ENCODE measurements at regions of chr12 and their contacts with region 1.

Region 1: GRCh38 chr12:51341259-51342007 is 5.0 kb downstream of the CELA1 start:
- DNase-seq: peak; percentile 80
- ATAC-seq: peak; percentile 78
- H3K4me3 Mint-ChIP-seq: no peak overlapping the region
- H3K27ac Mint-ChIP-seq: peak overlapping the region; percentile 32
- H3K4me1 Mint-ChIP-seq: peaks cover 22% of the 10 kb centered on the region
- H3K27me3 Mint-ChIP-seq: no peaks in the 10 kb centered on the region

Region 2: GRCh38 chr12:50825372-50825838 is 516.0 kb before region 1 on chr12:
- CTCF ChIA-PET with region 1: interaction called, 16 read pairs
- POLR2A ChIA-PET with region 1: no interaction called
- intact Hi-C with region 1: loop called in 1 of 2 experiments (anchors 1 kb)
- DNase-seq: no peak
- ATAC-seq: peak; percentile 61
- H3K4me3 Mint-ChIP-seq: no peak overlapping the region
- H3K27ac Mint-ChIP-seq: peak overlapping the region; percentile 35
- H3K4me1 Mint-ChIP-seq: peaks cover 6% of the 10 kb centered on the region
- H3K27me3 Mint-ChIP-seq: no peaks in the 10 kb centered on the region

Region 3: DNA sequence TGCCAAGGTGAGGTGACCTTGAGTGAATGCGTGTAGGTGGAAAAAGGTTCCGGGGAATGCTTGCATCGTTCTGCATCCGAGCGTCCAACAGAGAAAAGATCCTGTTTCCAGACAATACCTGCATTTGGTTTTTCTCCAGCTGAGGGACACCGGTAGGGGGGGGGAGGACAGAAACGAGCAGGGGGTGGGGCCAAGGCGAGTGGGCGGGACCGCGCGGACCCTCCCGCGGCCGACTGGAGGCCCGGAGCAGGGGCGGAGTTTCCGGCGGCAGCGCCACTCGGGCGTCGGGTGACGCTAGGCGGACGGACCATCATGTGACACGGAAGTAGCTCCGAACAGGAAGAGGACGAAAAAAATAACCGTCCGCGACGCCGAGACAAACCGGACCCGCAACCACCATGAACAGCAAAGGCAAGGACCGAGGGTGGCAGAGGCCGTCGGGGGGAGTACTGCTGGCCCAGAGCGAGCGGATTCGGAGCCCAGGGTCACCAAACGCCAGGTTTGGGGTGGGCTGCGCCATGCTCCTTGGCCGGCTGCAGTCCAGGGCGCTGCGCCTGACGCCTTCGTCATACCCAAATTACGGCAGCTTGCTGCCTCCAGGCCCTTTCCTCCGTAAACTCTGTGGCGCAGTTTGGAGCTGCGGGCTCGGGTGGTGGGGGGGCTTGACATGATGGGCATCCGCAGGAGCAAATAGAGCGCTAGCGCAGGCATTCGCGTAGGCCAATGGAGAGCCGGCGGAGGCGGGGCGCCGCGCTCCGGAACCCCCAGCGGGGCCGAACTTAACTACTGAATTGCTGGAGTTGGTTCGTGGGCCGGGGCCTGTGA is 102.7 kb before region 1 on chr12 and contains the start of gene DAZAP2:
- CTCF ChIA-PET with region 1: interaction called, 16 read pairs
- POLR2A ChIA-PET with region 1: no interaction called
- intact Hi-C with region 1: no loop called
- DNase-seq: peak; percentile 98
- ATAC-seq: peak; percentile 92
- H3K4me3 Mint-ChIP-seq: peak within 1 kb of the TSS; percentile 87
- H3K27ac Mint-ChIP-seq: peak within 1 kb of the TSS; percentile 100
- H3K4me1 Mint-ChIP-seq: peaks cover 36% of the 10 kb centered on the region
- H3K27me3 Mint-ChIP-seq: no peaks in the 10 kb centered on the region
- total RNA-seq, gene DAZAP2: 94.8 to 95.2 TPM

Region 4: DNA sequence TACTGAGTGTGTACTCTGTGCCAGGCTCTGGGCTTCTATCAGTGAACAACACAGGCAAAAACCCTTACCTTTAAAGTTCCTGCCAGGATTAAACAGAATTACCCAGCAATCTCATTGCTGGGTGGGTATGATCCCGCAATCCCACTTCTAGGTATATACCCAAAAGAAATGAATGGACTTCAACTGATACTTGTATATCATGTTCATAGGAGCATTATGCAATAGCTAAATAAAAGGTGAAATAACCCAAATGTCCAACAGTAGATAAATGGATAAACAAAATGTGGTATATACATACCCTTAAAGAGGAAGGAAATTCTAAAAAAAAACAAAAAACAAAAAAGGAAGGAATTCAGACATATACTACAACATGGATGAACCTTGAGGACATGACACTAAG is 88.2 kb before region 1 on chr12:
- CTCF ChIA-PET with region 1: interaction called, 20 read pairs
- POLR2A ChIA-PET with region 1: no interaction called
- intact Hi-C with region 1: no loop called
- DNase-seq: no peak
- ATAC-seq: no peak
- H3K4me3 Mint-ChIP-seq: no peak overlapping the region
- H3K27ac Mint-ChIP-seq: no peak overlapping the region
- H3K4me1 Mint-ChIP-seq: peaks cover 3% of the 10 kb centered on the region
- H3K27me3 Mint-ChIP-seq: no peaks in the 10 kb centered on the region

Region 5: DNA sequence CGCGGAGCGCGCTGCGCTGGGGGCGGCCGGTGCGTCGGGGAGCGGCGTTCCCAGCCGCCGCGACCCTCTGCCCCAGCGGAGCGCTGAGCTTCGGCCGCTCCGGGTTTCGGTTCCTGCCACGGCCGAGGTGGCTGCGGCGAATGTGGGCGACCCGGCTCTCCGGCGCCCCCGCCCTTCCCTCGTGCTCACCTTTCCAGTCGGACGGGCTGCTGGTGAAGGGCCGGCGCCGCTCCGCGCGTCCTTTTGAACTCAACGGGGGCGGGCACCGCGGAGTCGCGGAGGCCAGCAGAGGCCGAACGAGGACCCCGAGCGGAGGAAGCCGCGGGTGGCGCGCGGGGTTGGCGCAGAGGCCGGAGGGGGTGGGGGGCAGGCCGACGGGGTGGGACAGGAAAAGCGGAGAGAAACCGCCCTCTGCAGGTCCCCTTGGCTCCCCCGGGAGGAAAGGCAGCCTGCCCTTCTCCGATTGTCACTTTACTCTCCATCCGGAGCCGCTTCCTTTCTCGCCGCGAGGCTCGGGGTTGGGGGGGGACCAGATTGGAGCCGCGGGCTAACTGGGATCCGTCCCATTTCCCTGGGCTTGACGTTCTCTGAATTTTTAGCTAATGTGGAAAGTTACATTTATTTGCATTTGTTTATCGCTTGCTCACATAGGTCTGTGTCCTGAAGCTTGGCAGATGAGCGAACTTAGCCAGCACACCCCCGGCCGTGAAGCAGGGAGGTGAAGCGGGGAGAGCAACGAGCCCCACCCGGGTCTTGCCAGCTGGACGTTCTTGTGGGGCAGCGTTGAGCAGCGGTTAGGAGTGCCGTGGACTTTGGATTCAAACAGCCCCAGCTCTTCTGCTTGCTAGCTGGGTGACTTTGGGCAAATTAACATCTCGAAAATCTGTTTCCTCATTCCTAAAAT is 71.1 kb before region 1 on chr12 and contains the start of gene SMAGP:
- CTCF ChIA-PET with region 1: interaction called, 71 read pairs
- POLR2A ChIA-PET with region 1: interaction called, 6 read pairs
- intact Hi-C with region 1: loop called (anchors 1 kb)
- DNase-seq: peak; percentile 57
- ATAC-seq: peak; percentile 41
- H3K4me3 Mint-ChIP-seq: peak within 1 kb of the TSS; percentile 78
- H3K27ac Mint-ChIP-seq: no peak within 1 kb of the TSS
- H3K4me1 Mint-ChIP-seq: peaks cover 18% of the 10 kb centered on the region
- H3K27me3 Mint-ChIP-seq: peaks cover 14% of the 10 kb centered on the region
- total RNA-seq, gene SMAGP: 0.69 to 0.86 TPM

Region 6: GRCh38 chr12:51311389-51311788 is 30.0 kb before region 1 on chr12:
- CTCF ChIA-PET with region 1: interaction called, 11 read pairs
- POLR2A ChIA-PET with region 1: no interaction called
- intact Hi-C with region 1: no loop called
- DNase-seq: no peak
- ATAC-seq: no peak
- H3K4me3 Mint-ChIP-seq: no peak overlapping the region
- H3K27ac Mint-ChIP-seq: no peak overlapping the region
- H3K4me1 Mint-ChIP-seq: peaks cover 47% of the 10 kb centered on the region
- H3K27me3 Mint-ChIP-seq: no peaks in the 10 kb centered on the region

Region 7: DNA sequence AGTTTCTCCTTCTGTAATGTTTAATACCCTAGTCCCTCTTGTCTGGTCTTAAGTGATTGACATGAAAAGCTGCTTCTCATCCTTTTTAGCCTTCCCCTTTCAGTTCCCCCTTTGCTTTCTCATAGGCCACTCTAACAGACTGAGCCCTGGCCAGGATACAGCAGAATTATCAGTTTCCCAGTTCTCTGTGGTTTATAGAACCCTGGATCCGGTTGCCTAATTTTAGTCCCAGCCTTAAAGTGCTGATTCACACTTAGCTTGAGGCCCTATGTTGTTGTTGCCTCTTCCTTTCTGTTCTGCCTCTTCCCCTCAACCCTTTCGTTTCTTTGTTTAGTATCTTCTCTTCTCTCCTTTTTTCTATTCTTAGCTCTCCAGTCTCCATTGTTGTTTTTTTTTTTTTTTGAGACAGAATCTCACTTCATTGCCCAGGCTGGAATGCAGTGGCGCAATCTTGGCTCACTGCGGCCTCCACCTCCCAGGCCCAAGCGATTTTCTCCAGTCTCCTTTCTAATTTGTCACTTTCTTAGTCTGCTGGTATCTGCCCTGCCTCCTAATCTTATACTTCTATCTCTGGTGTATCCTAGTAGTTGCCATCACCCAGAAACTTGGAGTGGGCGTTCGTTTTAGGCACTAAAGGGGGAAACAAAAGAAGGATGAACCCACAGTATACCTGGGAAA is 14.5 kb before region 1 on chr12:
- CTCF ChIA-PET with region 1: interaction called, 22 read pairs
- POLR2A ChIA-PET with region 1: no interaction called
- intact Hi-C with region 1: no loop called
- DNase-seq: no peak
- ATAC-seq: peak; percentile 18
- H3K4me3 Mint-ChIP-seq: peak overlapping the region; percentile 49
- H3K27ac Mint-ChIP-seq: peak overlapping the region; percentile 88
- H3K4me1 Mint-ChIP-seq: peaks cover 68% of the 10 kb centered on the region
- H3K27me3 Mint-ChIP-seq: no peaks in the 10 kb centered on the region